GM10248 (cell line): ENCODE measurements at regions of chr1 and their contacts with region 1.

Region 1: DNA sequence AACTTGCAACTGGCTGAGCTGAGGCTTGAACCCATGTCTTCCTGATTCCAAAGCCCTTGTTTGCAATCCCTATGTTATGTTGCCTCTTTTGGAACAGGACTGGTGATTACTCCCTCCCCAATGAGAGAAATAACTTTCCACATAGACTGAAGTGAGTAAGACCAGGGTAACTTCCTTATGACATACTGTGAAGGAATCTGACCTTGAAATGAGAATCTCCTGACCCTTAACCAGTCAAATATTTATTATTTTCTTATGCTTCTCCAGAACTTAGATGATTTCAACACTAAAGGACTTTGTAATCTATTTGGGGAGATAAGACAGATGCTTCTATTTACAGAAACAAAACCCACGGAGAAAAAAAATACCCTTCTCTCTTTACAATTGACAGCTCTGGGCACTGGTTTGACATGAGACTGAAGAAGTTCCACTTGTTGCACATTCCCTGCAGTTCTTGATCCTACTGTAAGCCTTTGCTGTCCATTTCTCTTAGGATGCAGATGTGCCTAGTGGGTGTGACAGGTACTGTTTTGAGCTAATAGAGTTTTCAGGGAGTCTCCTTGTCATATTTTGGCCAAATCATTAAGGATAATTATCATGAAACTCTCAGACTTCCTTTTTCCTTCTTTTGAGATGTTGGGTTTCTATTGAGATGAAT is 3.9 kb upstream of the RPTN start:
- DNase-seq: no peak
- CTCF ChIP-seq: no peak

Region 2: DNA sequence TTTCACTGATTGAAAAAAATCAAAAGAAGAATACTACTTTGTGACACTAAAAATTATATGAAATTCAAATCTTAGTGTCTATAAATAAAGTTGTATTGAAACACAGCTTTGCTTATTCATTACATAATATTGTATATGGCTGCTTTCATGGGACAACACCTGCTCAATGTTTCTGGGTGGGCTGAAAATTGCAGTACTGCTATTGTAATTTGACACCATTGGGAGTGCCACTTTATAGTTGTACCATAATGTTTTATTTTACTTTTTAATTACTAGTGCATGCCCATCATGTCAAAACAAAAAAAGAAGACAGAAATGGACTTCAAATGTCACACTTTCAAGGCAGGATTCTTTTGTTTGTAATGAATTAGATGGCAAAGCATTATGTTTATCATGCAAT is 12.6 kb after region 1 on chr1:
- CTCF ChIA-PET with region 1: interaction called, 10 read pairs
- POLR2A ChIA-PET with region 1: no interaction called
- DNase-seq: no peak
- CTCF ChIP-seq: no peak